ENCODE measurements at regions of chr4 and their contacts with region 1.

Region 1: GRCh38 chr4:26150948-26151347 is 169.9 kb upstream of the RBPJ start:
- DNase-seq: peak; percentile 5
- H3K4me3 ChIP-seq: no peak overlapping the region
- H3K27ac ChIP-seq: no peak overlapping the region
- H3K4me1 ChIP-seq: no peaks in the 10 kb centered on the region
- H3K27me3 ChIP-seq: peaks cover 4% of the 10 kb centered on the region
- CTCF ChIP-seq: peak in 1 of 2 donors; percentile 17

Region 2: GRCh38 chr4:26028793-26029567 is 122.0 kb before region 1 on chr4:
- CTCF ChIA-PET with region 1: no interaction called
- dilution Hi-C with region 1: no loop called
- in situ Hi-C with region 1: no loop called
- intact Hi-C with region 1: no loop called
- DNase-seq: no peak
- H3K4me3 ChIP-seq: no peak overlapping the region
- H3K27ac ChIP-seq: no peak overlapping the region
- H3K4me1 ChIP-seq: no peaks in the 10 kb centered on the region
- H3K27me3 ChIP-seq: peaks cover 2% of the 10 kb centered on the region
- CTCF ChIP-seq: no peak

Region 3: DNA sequence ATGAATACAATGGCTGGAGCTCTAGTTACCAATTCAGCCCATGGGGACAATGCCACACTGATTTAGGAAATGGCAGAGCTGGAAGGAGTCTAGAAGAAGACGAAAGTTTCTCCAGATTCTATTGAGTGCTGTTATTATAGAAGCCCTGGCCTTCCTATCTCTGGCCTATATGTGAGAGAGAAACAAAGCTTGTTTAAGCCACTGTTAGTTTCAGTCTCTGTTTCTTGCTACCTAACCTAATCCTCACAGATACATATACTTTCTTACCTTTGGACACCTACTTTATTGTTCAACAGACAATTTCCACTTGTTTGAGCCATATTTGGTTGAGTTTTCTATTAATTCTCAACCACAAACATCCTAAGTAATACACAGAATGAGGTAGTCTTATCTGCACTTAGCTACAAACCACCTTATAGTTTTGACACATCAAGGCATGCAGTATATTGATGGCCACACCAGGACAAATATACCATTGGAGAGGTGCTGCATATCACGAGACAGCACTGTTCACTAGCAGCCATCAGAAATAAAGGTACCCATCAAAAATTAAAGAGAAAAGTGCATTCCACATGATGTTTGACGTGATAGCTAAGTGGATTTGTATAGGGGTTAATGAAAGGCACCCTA is 46.8 kb before region 1 on chr4:
- CTCF ChIA-PET with region 1: no interaction called
- dilution Hi-C with region 1: loop called (anchors 5 kb)
- in situ Hi-C with region 1: no loop called
- intact Hi-C with region 1: no loop called
- DNase-seq: no peak
- H3K4me3 ChIP-seq: no peak overlapping the region
- H3K27ac ChIP-seq: no peak overlapping the region
- H3K4me1 ChIP-seq: no peaks in the 10 kb centered on the region
- H3K27me3 ChIP-seq: no peaks in the 10 kb centered on the region
- CTCF ChIP-seq: no peak

Region 4: GRCh38 chr4:26235500-26235899 is 84.6 kb after region 1 on chr4:
- CTCF ChIA-PET with region 1: no interaction called
- dilution Hi-C with region 1: no loop called
- in situ Hi-C with region 1: no loop called
- intact Hi-C with region 1: no loop called
- DNase-seq: peak; percentile 49
- H3K4me3 ChIP-seq: no peak overlapping the region
- H3K27ac ChIP-seq: no peak overlapping the region
- H3K4me1 ChIP-seq: no peaks in the 10 kb centered on the region
- H3K27me3 ChIP-seq: peaks cover 6% of the 10 kb centered on the region
- CTCF ChIP-seq: peak in 1 of 2 donors; percentile 32

Measured in mammary epithelial cell (primary cell).